Psoas muscle (tissue), 8 donors: ENCODE measurements at regions of chrX and their contacts with region 1.

Region 1: DNA sequence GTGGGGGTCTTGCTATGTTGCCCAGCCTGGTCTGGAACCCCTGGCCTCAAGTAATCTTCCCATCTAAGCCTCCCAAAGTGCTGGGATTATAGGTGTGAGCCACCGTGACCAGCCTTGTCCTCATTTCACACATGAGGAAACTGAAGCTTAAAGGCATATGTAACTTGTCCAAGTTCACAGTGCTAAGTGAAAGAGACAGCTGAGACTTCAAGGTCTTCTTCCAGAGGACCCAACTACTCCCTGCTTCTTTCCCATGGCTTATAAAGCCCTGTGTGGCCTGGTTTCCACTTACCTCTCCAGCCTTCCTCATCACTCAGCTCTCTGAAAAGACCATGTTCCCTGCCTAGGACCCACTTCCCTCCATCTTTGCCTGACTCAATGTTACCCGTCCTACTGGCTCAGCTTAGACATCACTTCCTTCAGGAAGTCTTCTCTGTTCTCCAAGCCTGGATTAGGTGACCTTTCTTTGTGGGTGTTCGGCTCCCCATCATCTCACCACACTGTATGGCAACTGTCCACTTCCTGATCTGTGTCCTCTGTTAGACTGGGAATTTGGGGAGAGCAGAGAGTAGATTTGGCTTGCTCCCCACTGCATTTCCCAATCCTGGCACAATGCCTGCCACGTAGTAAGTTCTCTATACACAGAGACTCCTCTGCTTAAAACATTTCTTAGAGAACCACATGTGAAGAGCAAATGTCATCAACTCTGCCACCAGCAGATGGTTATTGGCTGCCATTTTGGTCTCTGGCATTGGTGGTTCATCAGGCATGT is 30.4 kb upstream of the LAMP2 start:
- DNase-seq: peak in 1 of 2 donors; percentile 17
- ATAC-seq: no peak
- H3K4me3 ChIP-seq: no peak overlapping the region
- H3K27ac ChIP-seq: no peak overlapping the region
- H3K4me1 ChIP-seq: no peaks in the 10 kb centered on the region
- H3K27me3 ChIP-seq: no peaks in the 10 kb centered on the region
- CTCF ChIP-seq: no peak

Region 2: DNA sequence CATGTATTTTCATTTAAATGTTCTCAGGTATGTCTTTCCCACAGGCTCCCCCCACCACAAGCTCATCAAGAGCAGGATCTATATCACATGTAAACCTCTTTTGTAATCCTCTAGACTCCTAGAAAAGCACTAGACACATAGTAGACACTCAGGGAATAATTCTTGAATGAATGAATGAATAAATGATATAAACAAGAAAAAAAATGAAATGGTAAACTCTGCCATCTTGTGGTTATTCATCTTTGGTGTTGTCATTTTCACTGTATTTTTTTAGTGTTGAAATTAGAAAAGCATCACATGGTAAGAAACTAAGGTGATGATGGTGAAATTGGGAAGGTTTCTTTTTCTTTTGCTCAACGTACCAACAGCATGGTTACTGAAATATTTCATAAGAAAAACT is 164.6 kb after region 1 on chrX:
- intact Hi-C with region 1: loop called in 1 of 2 experiments (anchors 5 kb)
- DNase-seq: no peak
- ATAC-seq: no peak
- H3K4me3 ChIP-seq: no peak overlapping the region
- H3K27ac ChIP-seq: no peak overlapping the region
- H3K4me1 ChIP-seq: no peaks in the 10 kb centered on the region
- H3K27me3 ChIP-seq: no peaks in the 10 kb centered on the region
- CTCF ChIP-seq: peak; percentile 24

Region 3: DNA sequence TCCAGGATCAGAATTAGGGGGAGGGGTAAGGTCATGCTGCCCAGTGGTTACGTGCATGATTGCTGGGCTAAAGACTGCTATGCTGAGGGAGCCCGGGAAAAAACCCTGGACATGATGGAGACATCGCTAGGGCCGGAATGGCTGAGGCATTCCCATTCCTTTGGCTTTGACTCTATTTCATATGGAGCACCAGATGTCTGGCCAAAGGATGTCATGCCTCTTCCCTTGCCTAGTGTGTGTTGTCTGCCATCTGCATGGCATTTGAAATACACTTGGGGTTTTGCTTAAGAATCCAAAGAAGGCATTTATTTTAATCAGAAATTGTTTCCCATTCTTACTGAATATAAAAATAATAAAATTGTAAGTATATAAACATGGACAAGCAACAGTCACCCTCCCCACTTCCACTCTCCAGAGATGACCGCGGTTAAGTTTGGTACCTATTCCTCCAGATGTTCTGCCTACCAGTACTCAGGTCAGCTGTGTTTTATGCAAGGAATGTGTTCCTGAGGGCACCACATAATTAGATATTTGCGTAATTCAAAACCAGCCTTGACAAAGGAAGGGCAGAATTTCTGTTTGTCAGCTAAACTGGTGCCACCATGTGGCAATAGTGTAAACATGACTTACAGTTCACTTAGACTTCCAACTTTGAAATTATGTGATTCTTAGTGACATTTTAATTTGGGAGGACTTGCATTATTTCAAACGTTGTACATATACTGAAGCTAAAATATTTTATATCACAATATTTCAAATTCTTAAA is 270.3 kb after region 1 on chrX:
- intact Hi-C with region 1: loop called (anchors 5 to 10 kb)
- DNase-seq: no peak
- ATAC-seq: peak in 2 of 4 donors; percentile 47 to 54
- H3K4me3 ChIP-seq: no peak overlapping the region
- H3K27ac ChIP-seq: no peak overlapping the region
- H3K4me1 ChIP-seq: no peaks in the 10 kb centered on the region
- H3K27me3 ChIP-seq: peaks cover 0 to 3% (median 0%) of the 10 kb centered on the region in 3 donors
- CTCF ChIP-seq: peak; percentile 26